ENCODE measurements at regions of chr5 and their contacts with region 1.

Region 1: DNA sequence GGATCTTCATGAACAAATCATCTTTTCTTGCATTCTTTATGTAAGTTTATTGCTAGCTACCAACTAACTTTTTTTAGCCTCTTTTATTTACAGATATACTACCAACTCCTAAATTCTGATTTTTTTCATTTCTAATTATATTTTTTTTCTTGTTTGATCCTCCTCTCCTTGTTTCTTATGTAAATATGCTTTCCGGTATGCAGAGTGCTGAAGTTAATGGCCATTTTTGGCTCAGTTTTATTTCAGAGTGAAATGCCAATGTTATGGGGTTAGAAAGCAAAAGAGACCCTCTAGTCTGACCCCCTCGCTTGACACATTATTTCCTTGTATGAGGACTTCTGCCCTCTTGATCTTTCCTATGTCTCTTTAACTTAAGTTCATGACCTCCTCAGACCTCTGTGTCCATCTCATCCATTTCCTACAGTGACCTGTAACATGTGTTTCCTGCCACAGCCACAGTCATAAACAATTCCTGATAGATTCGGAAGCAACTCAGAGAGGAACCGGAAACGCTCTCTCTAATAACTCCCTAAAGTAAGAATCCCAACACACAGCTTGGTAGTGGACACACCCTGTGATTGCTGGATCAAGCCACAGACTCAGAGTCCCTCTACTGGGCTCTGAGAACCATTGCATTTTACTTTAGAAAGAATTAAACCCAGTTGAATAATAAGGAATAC is 42.9 kb upstream of the AFAP1L1 start:
- DNase-seq: no peak
- ATAC-seq: peak; percentile 92

Region 2: GRCh38 chr5:149125386-149125891 is 103.3 kb before region 1 on chr5:
- intact Hi-C with region 1: no loop called
- DNase-seq: no peak
- ATAC-seq: peak; percentile 38

Region 3: DNA sequence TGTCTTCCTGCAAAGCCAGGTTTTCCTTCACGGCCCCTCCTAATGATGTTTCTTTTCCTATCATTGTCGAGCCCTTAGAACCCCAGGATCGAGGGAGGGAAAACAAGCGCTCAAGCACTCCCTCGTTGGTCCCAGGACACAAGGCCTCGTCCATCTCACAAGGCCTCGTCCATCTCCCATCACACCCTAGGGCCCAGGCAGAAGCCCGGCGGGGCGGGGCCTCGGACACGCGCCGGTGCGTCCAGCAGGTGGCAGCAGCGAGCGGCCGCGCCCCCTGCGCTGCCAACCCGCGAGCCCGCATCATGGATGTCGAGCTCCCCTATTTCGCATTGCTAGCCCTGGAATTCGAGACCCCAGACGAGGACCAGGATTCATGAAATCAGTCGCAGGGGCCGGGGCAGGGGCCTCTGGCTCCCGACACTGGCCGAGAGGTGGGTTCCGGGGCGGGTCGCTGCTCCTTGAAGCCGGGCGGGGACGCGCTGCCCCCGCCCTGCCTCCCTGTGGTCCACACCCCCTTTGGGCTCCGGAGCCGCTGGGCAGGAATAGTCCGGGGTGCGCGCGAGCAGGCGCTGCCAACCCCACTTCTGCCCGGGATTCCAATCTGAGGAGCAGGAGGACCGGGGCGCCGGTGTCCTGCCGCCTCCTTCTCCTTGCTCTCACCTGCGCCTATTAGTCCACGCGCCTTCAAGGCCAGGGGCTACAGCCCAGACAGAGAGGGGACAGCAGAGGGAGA is 87.4 kb before region 1 on chr5 and contains the start of gene ABLIM3:
- intact Hi-C with region 1: loop called (anchors 1 kb)
- DNase-seq: peak; percentile 89
- ATAC-seq: peak; percentile 88
- total RNA-seq, gene ABLIM3: 134 TPM

Region 4: DNA sequence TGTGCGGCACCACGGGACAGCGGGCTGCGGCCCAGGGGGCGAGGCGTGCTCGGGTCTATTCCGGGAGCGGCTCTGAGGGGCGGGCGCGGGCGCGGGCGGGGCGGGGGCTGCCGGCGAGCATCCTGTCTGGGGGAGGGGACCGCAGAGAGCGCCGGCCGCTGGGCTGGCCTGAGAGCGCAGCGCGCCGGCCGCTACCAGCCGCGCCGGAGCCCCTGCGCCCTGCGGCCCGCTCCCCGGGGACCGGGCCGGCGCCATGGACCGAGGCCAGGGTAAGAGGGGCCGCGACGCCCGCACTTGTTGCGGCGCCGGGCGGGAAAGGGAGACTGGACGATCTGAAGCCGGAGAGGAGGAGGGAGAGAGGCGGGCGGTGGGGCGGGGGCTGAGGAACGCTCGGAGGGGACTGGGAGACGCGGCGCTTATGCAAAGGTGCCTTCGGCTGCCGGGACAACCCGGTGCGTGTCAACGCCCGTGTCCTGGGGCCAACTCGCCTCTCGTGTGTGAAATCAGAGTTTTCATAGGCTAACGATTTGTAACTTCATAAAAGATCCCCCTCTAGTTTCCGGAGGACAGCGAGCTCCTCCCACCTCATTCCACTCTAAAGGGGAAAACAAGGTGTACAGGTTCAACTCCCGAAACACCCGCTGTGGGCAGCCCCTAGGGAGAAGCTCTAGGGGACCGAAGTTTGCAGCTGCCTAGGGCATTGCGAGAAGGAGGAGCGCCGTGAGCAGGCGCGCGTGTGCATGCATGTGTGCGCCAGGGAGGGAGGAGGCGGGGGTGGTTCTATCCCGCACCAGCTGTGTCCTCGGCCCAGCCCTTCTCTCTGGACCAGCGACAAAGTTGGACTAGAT is 43.2 kb after region 1 on chr5 and contains the start of gene AFAP1L1:
- intact Hi-C with region 1: no loop called
- DNase-seq: peak; percentile 87
- ATAC-seq: peak; percentile 93
- total RNA-seq, gene AFAP1L1: 46.9 TPM

Measured in Right ventricle myocardium inferior (tissue), 1 donor.